ENCODE measurements at regions of chr22 and their contacts with region 1.

Region 1: GRCh38 chr22:21760640-21761039 is 25.0 kb upstream of the YPEL1 start:
- DNase-seq: no peak
- H3K4me3 Mint-ChIP-seq: no peak overlapping the region
- H3K27ac Mint-ChIP-seq: peak overlapping the region; percentile 25
- H3K4me1 Mint-ChIP-seq: peaks cover 57% of the 10 kb centered on the region
- H3K27me3 Mint-ChIP-seq: no peaks in the 10 kb centered on the region

Region 2: DNA sequence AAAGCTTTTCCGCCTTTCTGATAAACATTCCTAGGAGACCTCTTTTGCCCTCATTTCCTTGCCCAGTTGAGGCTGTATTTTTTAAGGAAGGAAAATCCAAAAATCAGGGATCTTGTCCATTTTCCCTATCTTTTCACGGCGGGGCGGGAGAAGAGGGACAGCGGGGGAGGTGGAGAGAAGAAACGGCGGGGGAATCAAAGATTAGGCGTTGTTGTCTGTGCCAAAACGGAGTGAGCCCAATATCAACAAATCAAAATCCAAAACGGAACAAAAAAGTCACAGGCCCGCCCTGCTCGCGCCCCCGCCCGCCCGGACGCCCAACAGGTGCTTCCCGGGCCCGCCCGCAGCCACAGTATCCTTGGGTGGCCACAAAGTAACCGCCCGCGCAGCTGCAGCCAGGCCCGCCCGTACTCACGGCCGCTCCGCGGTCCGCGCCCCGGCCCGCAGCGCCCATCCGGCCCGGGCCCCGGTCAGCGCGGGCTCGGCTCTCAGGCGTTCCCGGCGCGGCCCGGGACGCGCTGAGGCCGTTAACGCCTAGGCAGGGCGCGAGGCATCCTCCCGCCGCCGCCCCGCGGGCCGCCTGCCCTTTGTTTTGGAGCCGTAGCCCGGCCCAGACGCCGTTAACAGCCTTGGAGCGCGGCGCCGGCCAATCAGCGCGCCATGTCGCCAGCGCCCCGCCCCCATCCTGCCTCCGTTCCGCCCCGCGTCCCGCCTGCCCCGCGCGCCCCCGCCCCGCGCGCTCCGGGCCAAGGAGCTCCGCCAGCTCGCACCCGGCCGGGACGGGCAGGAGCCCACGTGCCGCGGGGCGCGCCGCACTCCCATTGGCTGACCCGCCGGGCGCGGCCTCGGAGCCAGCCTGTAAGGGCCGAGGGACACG is 25.2 kb before region 1 on chr22 and contains the start of gene YPEL1:
- intact Hi-C with region 1: loop called (anchors 1 kb)
- DNase-seq: peak; percentile 96
- H3K4me3 Mint-ChIP-seq: peak within 1 kb of the TSS; percentile 85
- H3K27ac Mint-ChIP-seq: peak within 1 kb of the TSS; percentile 85
- H3K4me1 Mint-ChIP-seq: peaks cover 32% of the 10 kb centered on the region
- H3K27me3 Mint-ChIP-seq: peaks cover 19% of the 10 kb centered on the region
- total RNA-seq, gene YPEL1: 0.34 and 0.71 TPM in 2 replicates

Region 3: DNA sequence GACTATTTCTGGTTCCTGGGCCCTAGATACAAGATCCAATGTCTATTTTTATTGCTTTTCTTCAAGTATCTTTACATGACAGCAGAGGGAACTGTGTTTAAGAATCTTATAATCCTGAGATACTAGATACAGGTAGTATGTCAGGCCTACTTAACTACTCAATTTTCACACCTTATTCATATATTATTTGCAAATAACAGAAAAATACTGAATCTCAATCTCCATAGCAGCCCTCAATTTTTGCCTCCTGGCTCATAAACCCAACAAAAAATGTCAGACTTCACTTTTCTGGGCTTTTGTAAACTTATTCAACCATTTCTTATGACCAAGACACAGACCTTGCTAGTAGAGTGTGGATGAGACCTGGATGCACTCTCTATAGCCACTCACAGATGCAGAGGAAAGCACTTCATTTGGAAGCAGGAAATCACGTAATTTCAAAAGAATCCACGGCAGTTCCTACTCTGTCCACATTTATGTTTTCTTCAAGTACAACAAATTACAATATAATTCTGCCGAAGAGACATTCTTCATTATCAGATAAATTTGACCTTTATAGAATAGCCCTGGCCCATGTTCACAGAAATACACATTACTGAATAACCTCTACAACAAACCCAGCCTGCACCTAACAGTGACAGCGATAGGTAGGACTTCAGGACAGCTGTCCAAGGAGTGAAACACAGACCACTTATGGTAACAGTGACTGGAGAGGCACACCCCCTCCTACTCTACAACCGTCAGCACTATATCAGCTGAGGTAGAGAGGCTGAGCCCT is 37.0 kb after region 1 on chr22:
- intact Hi-C with region 1: no loop called
- DNase-seq: no peak
- H3K4me3 Mint-ChIP-seq: no peak overlapping the region
- H3K27ac Mint-ChIP-seq: no peak overlapping the region
- H3K4me1 Mint-ChIP-seq: no peaks in the 10 kb centered on the region
- H3K27me3 Mint-ChIP-seq: no peaks in the 10 kb centered on the region

Region 4: DNA sequence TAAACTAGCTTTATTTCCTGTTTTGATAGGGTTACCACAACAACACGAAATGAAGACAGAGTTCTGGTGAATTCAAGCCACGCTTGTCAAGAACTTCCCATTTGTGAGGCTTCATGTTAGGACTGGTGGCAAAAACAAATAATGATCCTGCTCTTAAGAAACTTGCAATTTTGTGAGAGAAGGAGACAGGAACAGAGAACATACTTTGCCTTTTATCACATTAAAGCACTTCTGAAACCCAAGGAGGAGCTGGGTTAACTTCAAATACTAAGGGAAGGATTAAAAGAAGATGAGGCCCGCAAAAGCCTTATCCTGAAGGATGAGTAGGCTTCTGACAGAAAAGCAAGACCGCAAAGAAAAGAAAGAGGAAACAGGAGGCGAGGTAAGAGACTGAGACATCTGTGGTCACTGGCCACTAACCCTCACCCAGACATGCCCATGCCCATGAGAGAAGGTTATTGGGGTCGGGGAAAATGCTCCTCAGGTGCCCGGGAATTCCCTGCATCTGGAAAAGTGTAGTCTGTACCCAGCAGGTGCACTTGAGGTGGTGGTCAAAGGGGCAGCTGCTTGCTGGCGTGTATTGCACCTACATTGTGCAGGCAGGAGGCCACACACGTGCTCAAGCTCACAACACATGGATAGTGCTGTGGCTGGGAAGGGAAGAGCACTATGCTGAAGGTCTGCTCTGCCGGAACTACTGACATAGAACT is 56.3 kb after region 1 on chr22:
- intact Hi-C with region 1: loop called (anchors 1 kb)
- DNase-seq: peak; percentile 42
- H3K4me3 Mint-ChIP-seq: peak overlapping the region; percentile 65
- H3K27ac Mint-ChIP-seq: peak overlapping the region; percentile 96
- H3K4me1 Mint-ChIP-seq: peaks cover 47% of the 10 kb centered on the region
- H3K27me3 Mint-ChIP-seq: no peaks in the 10 kb centered on the region

Region 5: GRCh38 chr22:21952586-21953571 is 192.2 kb after region 1 on chr22 and contains the start of gene PPM1F:
- intact Hi-C with region 1: loop called (anchors 5 kb)
- DNase-seq: peak; percentile 88
- H3K4me3 Mint-ChIP-seq: peak within 1 kb of the TSS; percentile 79
- H3K27ac Mint-ChIP-seq: peak within 1 kb of the TSS; percentile 79
- H3K4me1 Mint-ChIP-seq: peaks cover 6% of the 10 kb centered on the region
- H3K27me3 Mint-ChIP-seq: no peaks in the 10 kb centered on the region
- total RNA-seq, gene PPM1F: 28.5 and 28.7 TPM in 2 replicates

Measured in activated T-helper 1 cell treated with anti-CD3 and anti-CD28 coated beads, Interleukin-12 subunit alpha, Interleukin-12 subunit beta, Interleukin-2, Interleukin-4 antibody, amounts not matched to agents 30 ng/mL and 10 ng/mL and 1 ng/mL, durations not matched to agents 14 hours and 24 hours and 36 hours (primary cell).